Motor neuron (in vitro differentiated cells): ENCODE measurements at regions of chr5 and their contacts with region 1.

Region 1: DNA sequence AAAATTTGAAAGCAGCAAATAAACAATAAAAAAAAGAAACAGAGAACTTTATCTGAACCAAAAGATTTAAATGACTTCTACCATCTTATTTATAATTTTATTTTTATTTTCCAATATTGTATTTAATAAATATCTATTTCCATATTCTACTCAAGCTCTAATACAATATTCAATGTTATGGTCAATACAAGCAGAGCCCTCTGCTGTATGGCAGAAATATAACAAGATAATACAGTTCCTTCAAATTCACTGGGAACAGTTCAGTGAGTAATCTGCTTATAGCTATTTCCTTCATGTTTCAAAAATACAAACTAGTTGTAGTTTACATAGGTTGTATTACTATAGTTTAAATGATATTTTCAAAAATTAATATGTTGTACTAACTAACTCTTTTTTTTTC is 332.7 kb downstream of the PRDM9 start:
- ATAC-seq: no peak
- H3K4me3 ChIP-seq: no peak overlapping the region
- H3K27ac ChIP-seq: no peak overlapping the region
- H3K4me1 ChIP-seq: no peaks in the 10 kb centered on the region

Region 2: DNA sequence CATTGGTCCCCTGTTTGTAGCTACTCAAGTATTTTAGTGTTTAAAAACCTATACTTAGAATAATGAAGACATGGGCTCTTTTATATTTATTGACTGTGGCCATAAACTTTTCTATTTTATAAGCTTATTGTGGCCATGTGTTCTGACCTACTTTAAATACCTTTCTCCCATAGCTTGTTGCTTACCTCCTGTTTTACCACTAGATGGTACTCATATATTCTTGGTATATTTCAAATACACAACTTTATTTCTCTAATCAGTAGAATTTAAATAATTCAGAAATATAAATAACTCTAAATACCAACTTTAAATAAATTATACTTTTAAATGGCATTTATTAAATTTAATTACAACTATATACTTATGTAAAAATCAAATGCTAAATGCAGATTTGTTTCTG is 165.3 kb after region 1 on chr5:
- in situ Hi-C with region 1: no loop called
- ATAC-seq: no peak
- H3K4me3 ChIP-seq: no peak overlapping the region
- H3K27ac ChIP-seq: no peak overlapping the region
- H3K4me1 ChIP-seq: no peaks in the 10 kb centered on the region

Region 3: GRCh38 chr5:24110004-24110615 is 270.0 kb after region 1 on chr5:
- in situ Hi-C with region 1: loop called in 1 of 9 experiments (anchors 25 kb)
- ATAC-seq: peak in 1 of 8 experiments; percentile 26
- H3K4me3 ChIP-seq: no peak overlapping the region
- H3K27ac ChIP-seq: no peak overlapping the region
- H3K4me1 ChIP-seq: peaks cover 0 to 2% of the 10 kb centered on the region in 2 donors